ENCODE measurements at regions of chr9 and their contacts with region 1.

Region 1: GRCh38 chr9:101458955-101459631 is 23.5 kb upstream of the ALDOB start:
- DNase-seq: no peak
- ATAC-seq: peak; percentile 76
- H3K4me3 ChIP-seq: no peak overlapping the region
- H3K27ac ChIP-seq: no peak overlapping the region
- H3K4me1 ChIP-seq: peaks cover 0 to 1% of the 10 kb centered on the region in 2 donors
- H3K27me3 ChIP-seq: no peaks in the 10 kb centered on the region

Region 2: DNA sequence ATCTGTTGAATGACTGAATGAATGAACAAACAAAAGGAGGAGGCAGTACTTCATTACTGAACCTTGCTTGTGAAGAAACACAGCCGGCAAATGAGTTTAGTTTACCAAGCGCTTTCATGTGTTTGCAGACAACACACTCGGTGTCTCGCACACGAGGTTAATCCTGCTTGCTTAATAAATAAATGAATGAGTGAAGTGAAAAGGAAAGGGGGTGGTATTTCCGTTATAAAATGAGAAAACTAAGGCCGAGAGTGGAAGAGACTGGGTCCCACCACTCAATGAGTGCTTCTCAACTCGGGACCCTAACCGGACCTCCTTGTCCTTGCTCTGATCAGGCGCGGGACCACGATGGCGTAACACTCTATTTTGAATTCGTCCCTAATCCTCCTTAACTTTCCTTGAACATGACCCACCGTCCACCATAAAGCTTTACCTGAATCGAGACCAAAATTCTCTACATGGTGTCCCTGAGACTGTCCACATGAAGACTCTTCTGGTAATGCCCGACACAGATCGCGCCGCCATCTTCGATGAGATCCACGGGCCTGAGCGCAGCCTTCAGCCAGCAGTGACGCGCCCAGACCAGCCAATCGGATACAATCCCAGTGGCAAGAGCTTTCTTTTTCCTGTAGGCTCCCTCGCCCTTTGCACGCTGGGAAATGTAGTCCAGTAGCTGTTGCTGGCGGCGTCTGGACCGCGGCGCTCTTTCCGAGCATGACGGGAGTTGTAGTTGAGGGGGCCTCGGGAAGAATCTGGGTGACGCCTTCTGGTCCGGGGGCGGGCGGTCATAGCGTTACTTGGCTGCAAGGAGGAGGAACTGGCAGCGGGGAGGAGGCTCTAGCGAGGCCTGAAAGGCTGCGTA is 60.8 kb before region 1 on chr9 and contains the starts of genes MRPL50 and ZNF189:
- intact Hi-C with region 1: loop called in 1 of 2 experiments (anchors 10 kb)
- DNase-seq: peak; percentile 99
- ATAC-seq: peak; percentile 100
- H3K4me3 ChIP-seq: peak within 1 kb of the TSS; percentile 90 to 99
- H3K27ac ChIP-seq: peak within 1 kb of the TSS in 1 of 2 donors; percentile 73
- H3K4me1 ChIP-seq: peaks cover 0 to 5% of the 10 kb centered on the region in 2 donors
- H3K27me3 ChIP-seq: no peaks in the 10 kb centered on the region
- total RNA-seq, gene MRPL50: 7.6 to 8.9 TPM
- total RNA-seq, gene ZNF189: 20.4 to 23.3 TPM